ENCODE measurements at regions of chr17 and their contacts with region 1.

Region 1: DNA sequence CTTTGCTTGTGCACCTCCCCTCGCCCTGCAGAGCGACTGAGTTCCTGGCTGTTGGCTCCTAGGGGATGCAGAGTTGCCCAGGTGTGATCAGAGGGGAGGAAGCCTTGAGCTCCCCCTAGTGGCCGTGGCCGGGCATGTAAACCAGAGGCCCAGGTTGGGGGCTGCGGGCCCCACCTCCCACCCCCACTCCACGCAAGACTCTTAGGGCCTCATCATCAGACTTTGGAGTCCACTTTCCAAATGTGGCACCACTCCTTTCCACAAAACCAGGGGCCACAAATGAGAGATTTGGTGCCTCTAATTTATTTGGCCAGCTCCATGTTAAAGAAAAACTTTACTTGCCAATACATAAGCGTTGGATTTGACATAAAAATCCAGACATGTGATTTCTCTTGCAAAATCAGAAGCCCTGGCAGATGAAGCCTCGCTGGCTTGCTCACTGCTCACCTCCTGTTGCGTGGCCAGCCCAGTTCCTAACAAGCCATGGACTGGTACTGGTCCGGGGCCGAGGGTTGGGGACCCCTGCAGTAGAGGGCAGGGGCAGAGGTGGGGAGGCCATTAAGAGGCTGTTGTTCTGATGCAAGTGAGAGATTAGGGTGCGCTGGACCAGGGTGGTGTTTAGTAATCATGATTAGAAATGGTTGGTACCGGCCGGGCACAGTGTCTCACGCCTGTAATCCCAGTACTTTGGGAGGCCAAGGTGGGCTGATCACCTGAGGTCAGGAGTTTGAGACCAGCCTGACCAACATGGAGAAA is 28.7 kb upstream of the GAS7 start:
- DNase-seq: peak; percentile 1 to 65 (median 16)
- ATAC-seq: no peak
- H3K4me3 ChIP-seq: no peak overlapping the region
- H3K4me3 Mint-ChIP-seq: no peak overlapping the region
- H3K27ac ChIP-seq: no peak overlapping the region
- H3K27ac Mint-ChIP-seq: no peak overlapping the region
- H3K4me1 ChIP-seq: peaks cover 3% of the 10 kb centered on the region
- H3K4me1 Mint-ChIP-seq: no peaks in the 10 kb centered on the region
- H3K27me3 ChIP-seq: no peaks in the 10 kb centered on the region
- H3K27me3 Mint-ChIP-seq: no peaks in the 10 kb centered on the region
- CTCF ChIP-seq: peak; percentile 59

Region 2: DNA sequence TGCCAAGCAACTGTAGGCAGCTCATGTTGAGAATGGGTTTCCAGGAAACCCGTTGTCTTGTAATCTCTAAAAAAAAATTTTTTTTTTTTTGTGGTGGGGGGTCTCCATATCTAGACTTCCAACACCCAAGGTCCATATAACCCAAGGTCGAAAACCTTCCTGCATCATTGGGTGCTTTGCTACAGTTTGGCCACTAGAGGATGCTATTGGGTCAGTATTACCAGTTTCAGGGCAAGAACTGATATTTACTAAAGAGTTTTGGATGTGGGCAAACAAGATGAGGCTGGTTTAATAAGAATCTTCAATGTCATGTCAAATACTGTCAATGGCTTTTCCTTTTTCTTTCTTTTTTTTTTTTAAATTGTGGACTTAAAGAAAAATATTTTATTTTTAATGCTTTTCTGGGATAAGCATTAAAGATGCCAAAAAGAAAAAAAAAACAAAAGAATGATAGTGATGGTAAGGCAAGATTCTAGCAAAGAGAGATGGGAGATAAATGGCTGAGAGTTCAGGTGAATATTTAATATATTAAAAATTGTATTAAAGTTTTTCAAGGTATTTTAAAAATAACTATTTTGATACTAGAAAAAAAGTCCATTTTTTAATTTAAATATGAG is 498.0 kb before region 1 on chr17:
- CTCF ChIA-PET with region 1: no interaction called
- POLR2A ChIA-PET with region 1: no interaction called
- intact Hi-C with region 1: loop called in 1 of 2 experiments (anchors 10 kb)
- DNase-seq: peak in 3 of 14 experiments; percentile 35 to 52 (median 45)
- ATAC-seq: no peak
- H3K4me3 ChIP-seq: no peak overlapping the region
- H3K4me3 Mint-ChIP-seq: no peak overlapping the region
- H3K27ac ChIP-seq: no peak overlapping the region
- H3K27ac Mint-ChIP-seq: no peak overlapping the region
- H3K4me1 ChIP-seq: no peaks in the 10 kb centered on the region
- H3K4me1 Mint-ChIP-seq: no peaks in the 10 kb centered on the region
- H3K27me3 ChIP-seq: peaks cover 0 to 7% of the 10 kb centered on the region in 2 experiments
- H3K27me3 Mint-ChIP-seq: peaks cover 9% of the 10 kb centered on the region
- CTCF ChIP-seq: peak; percentile 90

Region 3: DNA sequence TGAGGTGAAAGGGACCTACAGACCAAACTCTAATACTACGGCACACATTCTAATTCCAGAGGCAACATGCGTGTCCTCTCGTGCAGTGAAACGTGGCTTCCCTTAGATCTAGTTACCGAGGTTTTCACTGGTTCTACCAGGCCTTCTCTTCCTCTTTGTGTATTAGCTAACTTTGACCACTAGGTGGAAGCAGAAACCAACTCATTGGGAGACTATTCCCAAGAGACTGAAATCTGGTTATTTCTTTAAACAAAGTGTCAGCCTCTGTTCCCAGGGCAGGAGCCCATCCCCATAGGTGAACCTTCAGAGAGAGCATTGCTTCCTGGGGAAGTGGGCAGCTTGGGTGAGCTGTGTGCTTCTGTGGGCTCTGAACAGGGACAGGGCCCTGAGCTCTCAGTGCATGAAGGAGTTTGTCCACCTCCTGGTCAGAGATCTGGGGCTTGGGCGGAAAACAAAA is 302.3 kb before region 1 on chr17:
- CTCF ChIA-PET with region 1: no interaction called
- POLR2A ChIA-PET with region 1: no interaction called
- intact Hi-C with region 1: loop called in 1 of 2 experiments (anchors 2 kb)
- DNase-seq: peak in 3 of 14 experiments; percentile 55 to 67 (median 61)
- ATAC-seq: no peak
- H3K4me3 ChIP-seq: no peak overlapping the region
- H3K4me3 Mint-ChIP-seq: no peak overlapping the region
- H3K27ac ChIP-seq: no peak overlapping the region
- H3K27ac Mint-ChIP-seq: no peak overlapping the region
- H3K4me1 ChIP-seq: no peaks in the 10 kb centered on the region
- H3K4me1 Mint-ChIP-seq: no peaks in the 10 kb centered on the region
- H3K27me3 ChIP-seq: no peaks in the 10 kb centered on the region
- H3K27me3 Mint-ChIP-seq: no peaks in the 10 kb centered on the region
- CTCF ChIP-seq: peak; percentile 61

Region 4: DNA sequence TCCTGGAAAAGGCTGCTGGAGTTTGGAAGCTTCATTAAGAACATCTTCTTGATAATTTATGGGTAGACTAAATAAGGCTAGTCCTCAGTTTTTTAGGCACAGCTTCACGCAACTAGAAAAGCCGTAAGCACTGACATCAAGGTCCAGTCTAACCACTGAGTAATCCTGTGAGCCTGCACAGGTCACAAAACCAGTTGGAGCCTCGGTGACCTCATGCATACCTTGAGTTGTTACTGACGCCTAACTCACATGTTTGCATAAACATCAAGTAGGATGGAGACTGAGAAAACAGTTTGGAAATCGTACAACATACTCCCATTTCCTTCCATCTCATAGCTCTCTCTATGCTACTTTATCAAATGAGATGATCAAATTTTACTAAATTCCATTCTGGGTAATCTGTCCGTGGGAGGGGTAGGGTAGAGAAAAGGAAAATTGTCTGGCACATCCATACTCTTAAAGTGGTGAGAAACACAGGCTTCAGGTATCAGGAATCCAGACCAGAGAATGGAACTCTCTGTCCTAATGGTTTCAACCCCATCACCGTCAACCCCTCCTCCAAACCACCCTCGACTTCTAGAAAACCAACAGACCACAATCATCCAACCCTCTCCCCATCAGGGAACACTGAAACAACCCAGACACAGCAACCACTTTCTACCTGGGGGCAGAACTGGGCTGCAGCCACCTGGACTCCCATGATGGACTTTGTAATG is 258.0 kb before region 1 on chr17:
- CTCF ChIA-PET with region 1: interaction called, 5 read pairs
- POLR2A ChIA-PET with region 1: no interaction called
- intact Hi-C with region 1: loop called (anchors 1 kb)
- DNase-seq: no peak
- ATAC-seq: no peak
- H3K4me3 ChIP-seq: no peak overlapping the region
- H3K4me3 Mint-ChIP-seq: no peak overlapping the region
- H3K27ac ChIP-seq: no peak overlapping the region
- H3K27ac Mint-ChIP-seq: no peak overlapping the region
- H3K4me1 ChIP-seq: no peaks in the 10 kb centered on the region
- H3K4me1 Mint-ChIP-seq: no peaks in the 10 kb centered on the region
- H3K27me3 ChIP-seq: no peaks in the 10 kb centered on the region
- H3K27me3 Mint-ChIP-seq: no peaks in the 10 kb centered on the region
- CTCF ChIP-seq: no peak

Region 5: DNA sequence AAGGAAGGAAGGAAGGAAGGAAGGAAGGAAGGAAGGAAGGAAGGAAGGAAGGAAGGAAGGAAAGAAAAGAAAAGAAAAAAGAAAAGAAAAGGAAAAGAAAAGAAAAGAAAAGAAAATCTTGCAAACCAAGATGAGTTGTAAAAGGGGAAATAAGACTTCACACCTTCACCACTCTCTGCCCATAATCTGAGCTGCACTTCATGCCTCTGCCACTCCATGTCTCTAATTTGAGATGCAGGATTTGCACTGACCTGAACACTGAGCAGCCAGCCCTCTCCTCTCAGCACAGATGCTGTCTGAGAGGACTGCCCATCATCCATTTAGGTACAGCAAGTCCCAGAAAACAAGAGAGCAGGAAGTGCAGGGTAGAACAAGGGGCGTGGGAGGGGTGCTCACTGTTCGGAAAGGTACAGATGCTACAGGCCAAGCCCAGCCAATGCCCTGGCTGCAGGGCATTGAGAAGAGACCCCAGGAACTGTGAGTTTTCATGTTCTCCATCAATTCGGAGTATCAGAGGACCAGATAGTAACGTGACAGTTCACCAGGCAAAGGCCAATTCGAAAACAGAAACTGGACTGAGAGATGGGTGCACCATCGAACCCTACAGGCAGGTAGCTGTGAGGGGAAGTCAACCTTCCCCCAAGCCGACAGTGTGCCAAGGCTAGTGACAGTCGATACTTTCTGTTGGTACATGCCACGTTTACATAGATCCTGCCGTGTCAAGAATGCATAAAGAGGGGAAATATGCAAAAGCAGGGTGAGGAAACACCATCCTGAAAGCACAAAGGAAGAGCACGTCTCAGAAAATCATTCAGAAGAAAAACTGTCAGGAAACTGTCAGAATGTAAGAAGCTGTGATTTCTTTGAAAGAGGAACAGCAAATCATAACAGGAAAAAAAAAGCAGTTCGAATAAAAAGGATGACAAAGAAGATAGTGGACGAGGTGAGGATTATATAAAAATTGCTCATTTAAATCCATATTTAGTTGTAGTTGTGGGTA is 180.0 kb before region 1 on chr17:
- CTCF ChIA-PET with region 1: no interaction called
- POLR2A ChIA-PET with region 1: no interaction called
- intact Hi-C with region 1: no loop called
- DNase-seq: no peak
- ATAC-seq: no peak
- H3K4me3 ChIP-seq: no peak overlapping the region
- H3K4me3 Mint-ChIP-seq: no peak overlapping the region
- H3K27ac ChIP-seq: no peak overlapping the region
- H3K27ac Mint-ChIP-seq: no peak overlapping the region
- H3K4me1 ChIP-seq: peaks cover 4% of the 10 kb centered on the region
- H3K4me1 Mint-ChIP-seq: peaks cover 7% of the 10 kb centered on the region
- H3K27me3 ChIP-seq: no peaks in the 10 kb centered on the region
- H3K27me3 Mint-ChIP-seq: no peaks in the 10 kb centered on the region
- CTCF ChIP-seq: no peak

Region 6: DNA sequence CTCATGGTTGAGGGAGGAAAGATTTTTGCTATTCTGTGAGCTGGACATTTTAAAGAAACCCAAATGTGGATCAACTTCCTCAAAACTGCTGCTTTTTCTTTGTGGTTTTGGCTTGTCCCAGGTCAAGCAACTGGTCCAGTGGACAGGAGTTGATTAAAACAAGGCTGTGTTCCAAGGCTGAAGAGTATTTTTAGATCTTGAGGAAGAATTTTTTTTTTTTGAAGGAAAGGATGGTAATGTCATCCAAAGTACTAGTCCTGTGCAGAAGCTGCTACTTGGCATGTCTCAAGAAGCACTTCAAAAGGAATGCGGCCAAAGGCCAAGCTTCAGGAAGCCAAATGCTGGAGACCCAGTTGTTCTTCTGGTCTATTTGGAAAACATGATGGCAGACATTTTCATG is 330.3 kb after region 1 on chr17:
- CTCF ChIA-PET with region 1: no interaction called
- POLR2A ChIA-PET with region 1: no interaction called
- intact Hi-C with region 1: no loop called
- DNase-seq: no peak
- ATAC-seq: no peak
- H3K4me3 ChIP-seq: no peak overlapping the region
- H3K4me3 Mint-ChIP-seq: no peak overlapping the region
- H3K27ac ChIP-seq: no peak overlapping the region
- H3K27ac Mint-ChIP-seq: no peak overlapping the region
- H3K4me1 ChIP-seq: no peaks in the 10 kb centered on the region
- H3K4me1 Mint-ChIP-seq: no peaks in the 10 kb centered on the region
- H3K27me3 ChIP-seq: no peaks in the 10 kb centered on the region
- H3K27me3 Mint-ChIP-seq: peaks cover 4% of the 10 kb centered on the region
- CTCF ChIP-seq: no peak

Measured in CD4-positive, alpha-beta T cell (primary cell).